ENCODE measurements at regions of chr6 and their contacts with region 1.

Region 1: GRCh38 chr6:129774697-129775447 is 64.9 kb upstream of the ARHGAP18 start:
- DNase-seq: peak; percentile 34
- H3K4me3 ChIP-seq: peak overlapping the region; percentile 27
- CTCF ChIP-seq: peak; percentile 95

Region 2: DNA sequence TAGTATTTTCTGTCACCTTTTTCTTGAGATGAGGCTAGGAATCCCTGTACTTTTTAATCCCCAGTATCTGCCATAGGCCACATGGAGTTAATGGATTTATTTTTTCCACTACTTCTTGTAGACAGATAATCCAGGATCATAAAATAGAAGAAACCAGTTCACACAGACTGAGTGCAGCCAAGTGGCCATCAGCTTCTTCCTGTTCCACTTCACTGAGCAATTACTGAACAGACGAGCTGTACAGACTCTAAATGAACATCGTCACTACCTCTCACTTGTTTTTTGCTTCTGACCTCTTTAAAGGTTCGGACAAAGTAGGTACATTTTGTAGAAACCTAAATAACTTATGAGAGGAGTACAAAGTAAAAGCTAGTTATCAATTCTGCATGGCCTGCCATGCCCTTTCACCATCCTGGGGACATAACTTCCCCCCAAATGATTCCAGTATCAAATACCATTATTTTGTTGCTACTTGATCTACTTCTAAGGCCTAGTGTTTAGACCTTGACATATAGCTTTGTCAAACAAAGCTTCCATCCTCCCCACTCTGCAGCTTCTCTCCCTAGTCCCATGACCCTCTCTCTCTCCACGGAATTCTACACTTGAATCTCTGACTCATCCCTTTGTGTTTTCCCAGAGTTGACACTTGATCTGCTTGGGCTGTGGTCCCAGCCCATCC is 30.5 kb before region 1 on chr6:
- CTCF ChIA-PET with region 1: interaction called, 18 read pairs
- POLR2A ChIA-PET with region 1: no interaction called
- DNase-seq: peak; percentile 31
- H3K4me3 ChIP-seq: no peak overlapping the region
- CTCF ChIP-seq: no peak

Region 3: DNA sequence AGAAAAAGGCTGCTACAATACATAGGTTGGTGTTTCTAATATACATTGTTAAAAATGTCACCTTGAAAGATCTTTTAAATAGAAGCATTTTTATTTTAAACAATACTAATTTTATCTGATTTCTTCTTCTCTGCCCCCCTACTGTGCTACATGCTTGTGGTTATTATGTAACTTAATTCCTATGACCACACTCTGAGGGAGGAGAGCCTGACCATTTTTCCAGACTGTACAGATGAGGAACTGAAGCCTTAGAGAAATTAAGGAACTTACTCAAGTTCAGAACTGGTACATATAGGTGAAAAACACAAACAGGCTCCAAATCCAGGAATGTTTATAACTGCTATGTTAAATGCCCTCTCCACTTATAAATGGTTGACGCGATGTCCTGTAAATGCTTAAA is 21.4 kb before region 1 on chr6:
- CTCF ChIA-PET with region 1: interaction called, 20 read pairs
- POLR2A ChIA-PET with region 1: no interaction called
- DNase-seq: no peak
- H3K4me3 ChIP-seq: no peak overlapping the region
- CTCF ChIP-seq: no peak

Region 4: DNA sequence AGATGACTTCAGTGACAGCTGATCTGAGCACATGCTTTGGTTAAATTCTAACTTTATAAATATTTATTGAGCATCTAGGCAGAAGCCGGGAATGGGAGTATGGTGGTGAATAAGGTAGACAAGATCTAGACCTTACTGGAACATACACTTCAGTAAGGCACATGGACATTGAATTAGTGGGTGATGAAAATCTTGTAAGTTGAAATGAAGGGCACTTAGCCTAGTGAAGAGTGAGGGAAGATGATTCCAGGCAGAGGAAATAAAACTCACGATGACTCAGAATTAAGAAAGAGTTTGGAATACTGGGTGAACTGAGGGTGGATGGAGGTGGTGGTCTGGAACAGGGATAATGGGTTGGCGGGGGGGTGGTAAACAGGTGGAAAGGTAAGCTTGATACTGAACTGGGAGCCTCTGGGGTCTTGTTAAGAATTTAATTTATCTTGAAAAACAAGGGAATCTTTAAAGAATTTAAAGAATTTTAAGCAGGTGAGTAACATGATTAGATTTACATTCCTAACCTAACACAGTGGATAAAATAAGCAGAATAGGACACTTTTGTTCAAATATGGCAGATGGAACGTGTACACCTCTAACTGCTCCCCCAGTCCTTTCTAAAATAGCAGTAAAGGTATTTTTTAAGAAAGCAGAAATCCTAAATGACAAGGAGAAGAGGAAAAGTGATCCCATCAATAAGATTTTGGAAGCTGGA is 10.3 kb after region 1 on chr6:
- CTCF ChIA-PET with region 1: interaction called, 108 read pairs
- POLR2A ChIA-PET with region 1: interaction called, 3 read pairs
- DNase-seq: no peak
- H3K4me3 ChIP-seq: no peak overlapping the region
- CTCF ChIP-seq: no peak

Region 5: GRCh38 chr6:129795261-129795660 is 20.4 kb after region 1 on chr6:
- CTCF ChIA-PET with region 1: interaction called, 108 read pairs
- POLR2A ChIA-PET with region 1: interaction called, 3 read pairs
- DNase-seq: no peak
- H3K4me3 ChIP-seq: no peak overlapping the region
- CTCF ChIP-seq: no peak

Region 6: DNA sequence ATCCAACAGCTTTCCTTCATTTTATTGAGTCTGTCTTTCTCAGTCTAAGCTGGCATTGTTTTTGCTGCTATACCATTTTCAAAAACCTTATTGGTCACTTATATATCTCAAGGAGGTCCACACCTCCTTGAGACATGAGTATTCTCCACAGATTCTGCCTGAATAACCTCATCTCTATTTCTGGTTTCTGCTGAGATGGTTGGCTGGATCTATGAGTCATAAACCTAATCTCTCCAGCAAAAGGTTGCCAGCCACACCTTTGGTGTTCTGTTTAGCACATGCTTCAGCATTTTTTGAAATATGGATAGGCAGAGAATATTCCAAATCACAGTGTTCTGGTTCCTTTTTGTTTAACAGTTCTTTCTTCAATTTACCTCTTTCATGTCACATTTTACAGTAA is 127.0 kb after region 1 on chr6:
- CTCF ChIA-PET with region 1: no interaction called
- POLR2A ChIA-PET with region 1: no interaction called
- DNase-seq: no peak
- H3K4me3 ChIP-seq: no peak overlapping the region
- CTCF ChIP-seq: no peak

Measured in AG04449 (cell line).